ENCODE measurements at regions of chr15 and their contacts with region 1.

Region 1: GRCh38 chr15:64883997-64884511 is 27.6 kb upstream of the ANKDD1A start:
- DNase-seq: peak; percentile 76
- ATAC-seq: peak; percentile 62
- H3K4me3 Mint-ChIP-seq: no peak overlapping the region
- H3K27ac Mint-ChIP-seq: peak overlapping the region; percentile 91
- H3K4me1 Mint-ChIP-seq: peaks cover 33% of the 10 kb centered on the region
- H3K27me3 Mint-ChIP-seq: no peaks in the 10 kb centered on the region

Region 2: GRCh38 chr15:64836023-64836536 is 48.0 kb before region 1 on chr15:
- CTCF ChIA-PET with region 1: interaction called, 10 read pairs
- DNase-seq: no peak
- ATAC-seq: no peak
- H3K4me3 Mint-ChIP-seq: peak overlapping the region; percentile 42
- H3K27ac Mint-ChIP-seq: peak overlapping the region; percentile 63
- H3K4me1 Mint-ChIP-seq: peaks cover 46% of the 10 kb centered on the region
- H3K27me3 Mint-ChIP-seq: no peaks in the 10 kb centered on the region

Region 3: DNA sequence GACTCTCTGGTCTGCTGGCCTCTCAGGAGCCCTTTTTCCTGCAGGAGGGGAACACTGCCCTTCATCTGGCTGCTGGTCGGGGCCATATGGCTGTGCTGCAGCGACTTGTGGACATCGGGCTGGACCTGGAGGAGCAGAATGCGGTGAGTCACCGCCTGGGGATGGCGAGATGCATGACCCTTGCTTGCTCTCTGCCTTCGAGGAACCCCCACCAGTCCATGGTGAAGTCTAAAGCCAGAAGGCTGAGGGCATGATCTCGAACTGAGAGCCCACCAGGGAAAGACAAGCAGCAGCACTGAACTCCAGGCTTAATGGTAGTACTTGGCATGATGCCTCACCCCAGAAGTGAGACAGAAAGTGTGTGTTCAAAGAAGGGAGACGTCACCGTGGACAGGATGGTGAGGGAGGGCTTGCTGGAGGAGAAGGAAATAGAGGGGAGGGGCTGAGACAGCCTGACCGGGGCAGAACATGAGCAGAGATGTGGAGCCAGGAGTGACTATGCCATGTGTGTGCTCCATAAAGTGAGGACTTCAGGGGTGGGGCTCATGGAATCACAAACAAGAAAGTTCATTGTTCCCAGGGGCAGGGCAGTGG is 46.8 kb after region 1 on chr15:
- CTCF ChIA-PET with region 1: no interaction called
- DNase-seq: peak; percentile 21
- ATAC-seq: no peak
- H3K4me3 Mint-ChIP-seq: no peak overlapping the region
- H3K27ac Mint-ChIP-seq: no peak overlapping the region
- H3K4me1 Mint-ChIP-seq: peaks cover 9% of the 10 kb centered on the region
- H3K27me3 Mint-ChIP-seq: no peaks in the 10 kb centered on the region